Panc1 (cell line): ENCODE measurements at regions of chr10 and their contacts with region 1.

Region 1: DNA sequence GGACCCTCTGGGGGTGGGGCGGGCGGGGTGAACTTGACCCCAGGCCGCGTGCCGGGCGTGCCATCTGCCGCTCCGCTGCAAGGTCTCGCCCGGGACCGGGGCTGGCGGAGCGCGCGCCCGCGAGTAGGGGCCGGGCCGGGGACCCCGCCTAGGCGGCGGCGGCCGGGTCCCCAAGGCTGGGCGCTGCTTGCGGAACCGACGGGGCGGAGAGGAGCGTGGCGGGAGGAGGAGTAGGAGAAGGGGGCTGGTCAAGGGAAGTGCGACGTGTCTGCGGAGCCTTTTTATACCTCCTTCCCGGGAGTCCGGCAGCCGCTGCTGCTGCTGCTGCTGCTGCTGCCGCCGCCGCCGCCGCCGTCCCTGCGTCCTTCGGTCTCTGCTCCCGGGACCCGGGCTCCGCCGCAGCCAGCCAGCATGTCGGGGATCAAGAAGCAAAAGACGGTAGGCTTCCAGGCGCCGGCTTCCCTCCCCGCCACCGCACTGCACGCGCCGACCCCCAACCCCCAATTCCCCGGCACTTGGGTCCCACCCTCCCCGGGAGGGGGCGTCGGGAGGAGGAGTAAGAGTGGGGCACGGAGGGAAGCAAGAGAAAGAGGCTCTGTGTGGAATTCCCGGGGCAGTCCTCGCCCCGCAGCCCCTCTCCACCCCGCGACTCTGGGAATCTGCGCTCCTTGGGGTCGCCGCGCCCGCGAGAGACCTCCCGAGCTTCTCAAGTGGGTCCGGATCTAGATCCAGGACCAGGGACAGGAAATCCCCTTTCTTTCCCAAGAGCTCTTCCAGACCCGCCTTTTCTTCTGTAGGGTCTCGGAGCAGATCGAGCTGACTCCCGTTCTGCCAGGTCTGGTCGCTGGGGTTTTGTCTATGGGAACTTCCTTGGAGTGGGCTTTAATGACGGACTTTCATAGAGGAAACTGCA is at the start of gene PAPSS2:
- DNase-seq: no peak
- ATAC-seq: peak; percentile 84
- H3K4me3 ChIP-seq: peak within 1 kb of the TSS; percentile 67 to 86
- H3K27ac ChIP-seq: peak within 1 kb of the TSS; percentile 79
- H3K4me1 ChIP-seq: peaks cover 10% of the 10 kb centered on the region; the same call in 1 of the 2 replicates
- H3K27me3 ChIP-seq: peaks cover 2% of the 10 kb centered on the region
- CTCF ChIP-seq: no peak; the same call in 1 of the 2 replicates
- total RNA-seq, gene PAPSS2: 17.1 TPM

Region 2: GRCh38 chr10:87511526-87511925 is 148.3 kb before region 1 on chr10:
- CTCF ChIA-PET with region 1: no interaction called
- POLR2A ChIA-PET with region 1: no interaction called
- in situ Hi-C with region 1: no loop called
- intact Hi-C with region 1: no loop called
- DNase-seq: no peak
- ATAC-seq: no peak
- H3K4me3 ChIP-seq: no peak overlapping the region
- H3K27ac ChIP-seq: no peak overlapping the region
- H3K4me1 ChIP-seq: peaks cover 12% of the 10 kb centered on the region
- H3K27me3 ChIP-seq: no peaks in the 10 kb centered on the region
- CTCF ChIP-seq: no peak

Region 3: DNA sequence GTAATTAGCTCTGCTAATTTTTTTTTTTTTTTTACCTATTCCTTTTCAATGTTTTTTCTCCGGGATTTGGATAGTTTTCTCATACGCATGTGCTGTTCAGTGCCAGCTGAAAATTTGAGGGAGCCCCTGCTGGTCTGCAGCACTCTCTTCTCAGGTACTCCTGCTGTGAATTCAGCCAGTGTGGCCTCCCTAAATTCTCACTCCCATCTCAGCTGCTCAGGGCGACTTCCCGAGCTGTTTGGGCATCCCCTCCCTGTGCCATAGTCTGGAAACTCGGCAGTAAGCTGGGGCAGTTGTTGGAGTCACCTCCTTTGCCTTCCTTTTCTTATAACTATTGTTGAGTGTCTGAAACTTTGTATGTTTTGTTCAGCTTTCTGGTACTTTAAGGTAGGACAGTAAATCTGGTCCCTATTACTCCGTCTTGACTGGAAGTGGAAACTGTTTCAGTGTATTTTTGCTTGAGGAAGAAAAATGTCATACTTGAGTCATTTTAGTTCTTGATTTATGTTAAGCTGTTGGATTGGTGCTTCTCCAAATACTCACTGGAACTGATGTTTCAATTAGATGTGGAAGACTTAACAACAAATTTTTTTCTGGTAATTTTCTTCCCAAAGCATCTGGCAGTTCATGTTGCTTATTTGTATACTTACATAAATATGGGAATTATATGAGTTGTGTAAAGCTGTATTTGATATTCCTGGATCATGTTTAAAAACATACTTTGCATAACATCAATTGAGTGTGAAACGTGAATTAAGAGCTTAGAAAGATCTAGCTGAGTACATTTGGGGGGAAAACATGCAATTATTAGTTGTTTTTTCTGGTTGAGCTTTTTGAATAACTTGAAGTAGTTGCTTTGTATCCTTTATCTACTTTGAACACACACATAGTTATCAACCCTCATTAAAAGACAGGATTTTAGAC is 121.5 kb before region 1 on chr10:
- CTCF ChIA-PET with region 1: interaction called, 5 read pairs
- POLR2A ChIA-PET with region 1: no interaction called
- in situ Hi-C with region 1: no loop called
- intact Hi-C with region 1: loop called (anchors 5 kb)
- DNase-seq: no peak
- ATAC-seq: no peak
- H3K4me3 ChIP-seq: no peak overlapping the region
- H3K27ac ChIP-seq: no peak overlapping the region
- H3K4me1 ChIP-seq: no peaks in the 10 kb centered on the region
- H3K27me3 ChIP-seq: no peaks in the 10 kb centered on the region
- CTCF ChIP-seq: no peak

Region 4: GRCh38 chr10:87675396-87676376 is 15.9 kb after region 1 on chr10:
- CTCF ChIA-PET with region 1: interaction called, 10 read pairs
- POLR2A ChIA-PET with region 1: no interaction called
- in situ Hi-C with region 1: no loop called
- intact Hi-C with region 1: no loop called
- DNase-seq: no peak
- ATAC-seq: no peak
- H3K4me3 ChIP-seq: no peak overlapping the region
- H3K27ac ChIP-seq: no peak overlapping the region
- H3K4me1 ChIP-seq: no peaks in the 10 kb centered on the region
- H3K27me3 ChIP-seq: no peaks in the 10 kb centered on the region
- CTCF ChIP-seq: no peak

Region 5: GRCh38 chr10:87734987-87735827 is 75.4 kb after region 1 on chr10:
- CTCF ChIA-PET with region 1: interaction called, 4 read pairs
- POLR2A ChIA-PET with region 1: no interaction called
- in situ Hi-C with region 1: no loop called
- intact Hi-C with region 1: loop called (anchors 2 kb)
- DNase-seq: no peak
- ATAC-seq: peak; percentile 95
- H3K4me3 ChIP-seq: no peak overlapping the region
- H3K27ac ChIP-seq: no peak overlapping the region
- H3K4me1 ChIP-seq: no peaks in the 10 kb centered on the region
- H3K27me3 ChIP-seq: no peaks in the 10 kb centered on the region
- CTCF ChIP-seq: peak; percentile 91

Region 6: GRCh38 chr10:87771871-87772500 is 112.2 kb after region 1 on chr10:
- CTCF ChIA-PET with region 1: interaction called, 3 read pairs
- POLR2A ChIA-PET with region 1: no interaction called
- in situ Hi-C with region 1: no loop called
- intact Hi-C with region 1: loop called (anchors 2 kb)
- DNase-seq: no peak
- ATAC-seq: peak; percentile 67
- H3K4me3 ChIP-seq: no peak overlapping the region
- H3K27ac ChIP-seq: no peak overlapping the region
- H3K4me1 ChIP-seq: no peaks in the 10 kb centered on the region
- H3K27me3 ChIP-seq: no peaks in the 10 kb centered on the region
- CTCF ChIP-seq: peak; percentile 74

Region 7: GRCh38 chr10:88553116-88553752 is 893.4 kb after region 1 on chr10:
- CTCF ChIA-PET with region 1: no interaction called
- POLR2A ChIA-PET with region 1: no interaction called
- in situ Hi-C with region 1: no loop called
- intact Hi-C with region 1: loop called (anchors 10 kb)
- DNase-seq: peak; percentile 60
- ATAC-seq: peak; percentile 99
- H3K4me3 ChIP-seq: no peak overlapping the region
- H3K27ac ChIP-seq: no peak overlapping the region
- H3K4me1 ChIP-seq: peaks cover 4% of the 10 kb centered on the region; the same call in 1 of the 2 replicates
- H3K27me3 ChIP-seq: no peaks in the 10 kb centered on the region
- CTCF ChIP-seq: peak; percentile 86